Heart right ventricle (tissue), 16 donors: ENCODE measurements at regions of chr9 and their contacts with region 1.

Region 1: GRCh38 chr9:107044872-107045271 is 181.9 kb downstream of the ZNF462 start:
- DNase-seq: no peak
- ATAC-seq: no peak
- H3K4me3 ChIP-seq: no peak overlapping the region
- H3K27ac ChIP-seq: no peak overlapping the region
- H3K4me1 ChIP-seq: peaks cover 0 to 8% (median 0%) of the 10 kb centered on the region in 9 donors
- H3K27me3 ChIP-seq: no peaks in the 10 kb centered on the region
- CTCF ChIP-seq: peak in 2 of 9 donors; percentile 11 to 12

Region 2: GRCh38 chr9:106417685-106418084 is 627.2 kb before region 1 on chr9:
- intact Hi-C with region 1: no loop called
- DNase-seq: no peak
- ATAC-seq: no peak
- H3K4me3 ChIP-seq: no peak overlapping the region
- H3K27ac ChIP-seq: no peak overlapping the region
- H3K4me1 ChIP-seq: no peaks in the 10 kb centered on the region
- H3K27me3 ChIP-seq: no peaks in the 10 kb centered on the region
- CTCF ChIP-seq: no peak

Region 3: GRCh38 chr9:106648799-106649198 is 396.1 kb before region 1 on chr9:
- intact Hi-C with region 1: loop called in 1 of 10 experiments (anchors 10 kb)
- DNase-seq: no peak
- ATAC-seq: no peak
- H3K4me3 ChIP-seq: no peak overlapping the region
- H3K27ac ChIP-seq: no peak overlapping the region
- H3K4me1 ChIP-seq: no peaks in the 10 kb centered on the region
- H3K27me3 ChIP-seq: no peaks in the 10 kb centered on the region
- CTCF ChIP-seq: peak in 6 of 9 donors; percentile 31 to 49 (median 42)

Region 4: GRCh38 chr9:108478431-108478837 is 1433.6 kb after region 1 on chr9:
- intact Hi-C with region 1: no loop called
- DNase-seq: no peak
- ATAC-seq: peak in 4 of 8 donors; percentile 16 to 66 (median 37)
- H3K4me3 ChIP-seq: no peak overlapping the region
- H3K27ac ChIP-seq: peak overlapping the region in 1 of 10 donors; percentile 39
- H3K4me1 ChIP-seq: peaks cover 0 to 23% (median 11%) of the 10 kb centered on the region in 9 donors
- H3K27me3 ChIP-seq: no peaks in the 10 kb centered on the region
- CTCF ChIP-seq: no peak